ENCODE measurements at regions of chr2 and their contacts with region 1.

Region 1: GRCh38 chr2:76197842-76198448 is 487.2 kb upstream of the GCFC2 start:
- DNase-seq: peak; percentile 60 to 87
- H3K4me3 ChIP-seq: no peak overlapping the region
- H3K27ac ChIP-seq: no peak overlapping the region
- H3K4me1 ChIP-seq: peaks cover 0 to 3% (median 1%) of the 10 kb centered on the region in 4 experiments; a peak in 2 of 7 replicates
- H3K27me3 ChIP-seq: no peaks in the 10 kb centered on the region
- CTCF ChIP-seq: peak in 2 of 3 experiments; percentile 54 to 63; a peak in 3 of 4 replicates
- EP300 ChIP-seq: no peak
- POLR2A ChIP-seq: no peak
- RAD21 ChIP-seq: peak; percentile 61 to 66

Region 2: DNA sequence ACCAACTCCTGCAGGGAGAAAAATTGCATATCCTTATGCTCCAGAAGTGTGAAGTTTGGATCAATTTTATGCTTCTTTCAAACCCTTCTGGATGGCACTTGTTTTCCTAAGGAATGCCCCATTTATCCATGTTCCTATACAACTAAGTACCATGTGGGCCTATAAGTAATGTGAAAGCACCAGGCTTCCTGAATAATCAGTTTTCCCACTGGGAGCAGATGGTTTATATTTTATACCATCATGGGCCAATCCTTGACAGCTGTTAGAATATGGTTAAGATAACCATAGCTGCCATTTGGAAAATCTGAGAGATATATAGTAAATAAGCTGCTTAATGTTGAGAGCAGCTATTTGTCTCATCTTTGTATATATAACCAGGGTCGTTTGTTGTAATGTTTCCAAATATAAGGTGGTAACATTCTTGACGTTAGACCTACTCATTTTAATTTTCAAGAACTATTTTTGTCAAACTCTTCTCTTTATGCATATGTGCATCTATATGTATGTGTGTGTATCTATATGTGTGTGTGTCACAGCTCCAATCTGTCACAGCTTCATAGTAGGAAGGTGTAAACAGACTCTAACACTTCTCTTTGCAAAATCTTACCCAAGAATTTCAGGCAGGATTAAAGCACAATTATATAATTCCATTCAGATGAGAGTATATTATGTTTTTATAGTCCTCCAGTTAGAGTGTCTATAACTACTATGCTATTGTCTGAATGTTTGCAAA is 28.5 kb before region 1 on chr2:
- CTCF ChIA-PET with region 1: interaction called, 11 read pairs
- POLR2A ChIA-PET with region 1: no interaction called
- DNase-seq: no peak
- H3K4me3 ChIP-seq: no peak overlapping the region
- H3K27ac ChIP-seq: no peak overlapping the region
- H3K4me1 ChIP-seq: no peaks in the 10 kb centered on the region
- H3K27me3 ChIP-seq: no peaks in the 10 kb centered on the region
- CTCF ChIP-seq: no peak
- EP300 ChIP-seq: no peak
- POLR2A ChIP-seq: no peak
- RAD21 ChIP-seq: no peak

Region 3: DNA sequence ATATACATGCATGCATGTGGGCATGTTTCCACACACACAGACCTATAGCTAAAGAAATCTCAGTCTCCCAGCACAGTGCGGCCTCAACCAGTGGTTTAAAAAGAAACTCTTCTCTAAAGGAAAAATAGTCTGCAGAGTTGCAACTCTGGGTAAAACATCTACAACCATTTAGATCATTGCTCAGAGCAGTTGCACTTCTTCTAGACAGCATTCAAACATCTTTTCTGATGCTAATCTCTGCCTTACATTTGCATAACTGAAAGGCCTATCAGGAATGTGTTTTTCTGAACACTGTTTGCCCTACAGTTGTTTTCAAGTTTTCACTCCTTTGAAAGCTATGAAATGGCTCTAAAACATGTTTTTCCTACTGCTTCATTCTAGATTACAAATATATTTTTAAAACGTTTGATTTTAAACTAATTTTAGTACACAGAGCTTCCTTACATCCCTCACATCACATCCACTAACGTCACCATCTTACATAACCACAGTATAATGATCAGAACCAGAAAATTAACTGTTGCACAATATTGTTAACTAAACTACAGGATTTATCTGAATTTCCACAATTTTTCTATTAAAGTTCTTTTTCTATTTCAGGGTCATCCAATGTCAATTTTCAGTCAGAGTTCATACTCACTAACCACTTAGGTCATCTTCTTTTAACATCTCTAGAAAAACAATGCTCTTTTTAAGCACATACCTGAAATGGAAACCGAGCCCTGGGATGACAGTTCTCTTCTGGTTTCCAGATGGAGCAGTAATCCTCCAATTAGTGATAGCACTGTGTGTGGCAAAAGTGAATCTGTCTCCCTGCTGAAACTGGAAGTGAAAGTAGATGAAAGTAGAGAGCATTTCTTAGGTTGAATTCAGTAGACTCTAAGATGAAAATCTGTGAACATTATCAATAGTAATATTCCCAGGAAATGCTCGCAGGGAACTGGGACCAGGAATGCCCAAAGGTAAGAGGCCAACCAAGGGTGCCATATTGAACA is 14.3 kb after region 1 on chr2:
- CTCF ChIA-PET with region 1: interaction called, 30 read pairs
- POLR2A ChIA-PET with region 1: no interaction called
- DNase-seq: no peak
- H3K4me3 ChIP-seq: no peak overlapping the region
- H3K27ac ChIP-seq: no peak overlapping the region
- H3K4me1 ChIP-seq: peaks cover 0 to 7% (median 0%) of the 10 kb centered on the region in 4 experiments; a peak in 1 of 7 replicates
- H3K27me3 ChIP-seq: no peaks in the 10 kb centered on the region
- CTCF ChIP-seq: no peak
- EP300 ChIP-seq: no peak
- POLR2A ChIP-seq: no peak
- RAD21 ChIP-seq: no peak

Region 4: DNA sequence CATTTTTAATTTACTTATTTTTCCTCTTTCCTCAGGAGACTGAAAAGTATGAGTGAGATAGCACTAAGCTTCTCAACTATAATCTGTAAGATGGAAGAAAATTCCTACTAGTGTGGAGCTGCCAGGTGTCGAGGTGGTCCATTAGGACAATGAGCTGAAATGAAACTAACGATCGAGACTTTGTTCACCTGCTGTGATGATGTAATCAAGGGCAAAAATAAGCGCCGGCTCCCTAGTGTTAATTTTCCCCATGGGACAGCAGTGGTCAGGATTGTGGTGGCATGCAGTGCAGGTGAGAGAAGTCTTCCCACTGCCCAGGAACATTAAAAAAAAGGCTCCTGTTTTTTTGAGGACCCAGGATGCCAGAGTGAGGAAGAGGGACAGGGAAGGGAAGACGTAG is 371.9 kb after region 1 on chr2:
- CTCF ChIA-PET with region 1: interaction called, 10 read pairs
- POLR2A ChIA-PET with region 1: no interaction called
- DNase-seq: no peak
- H3K4me3 ChIP-seq: no peak overlapping the region
- H3K27ac ChIP-seq: no peak overlapping the region
- H3K4me1 ChIP-seq: peaks cover 0 to 16% (median 3%) of the 10 kb centered on the region in 4 experiments; a peak in 4 of 7 replicates
- H3K27me3 ChIP-seq: no peaks in the 10 kb centered on the region
- CTCF ChIP-seq: no peak
- EP300 ChIP-seq: no peak
- POLR2A ChIP-seq: no peak
- RAD21 ChIP-seq: no peak

Region 5: DNA sequence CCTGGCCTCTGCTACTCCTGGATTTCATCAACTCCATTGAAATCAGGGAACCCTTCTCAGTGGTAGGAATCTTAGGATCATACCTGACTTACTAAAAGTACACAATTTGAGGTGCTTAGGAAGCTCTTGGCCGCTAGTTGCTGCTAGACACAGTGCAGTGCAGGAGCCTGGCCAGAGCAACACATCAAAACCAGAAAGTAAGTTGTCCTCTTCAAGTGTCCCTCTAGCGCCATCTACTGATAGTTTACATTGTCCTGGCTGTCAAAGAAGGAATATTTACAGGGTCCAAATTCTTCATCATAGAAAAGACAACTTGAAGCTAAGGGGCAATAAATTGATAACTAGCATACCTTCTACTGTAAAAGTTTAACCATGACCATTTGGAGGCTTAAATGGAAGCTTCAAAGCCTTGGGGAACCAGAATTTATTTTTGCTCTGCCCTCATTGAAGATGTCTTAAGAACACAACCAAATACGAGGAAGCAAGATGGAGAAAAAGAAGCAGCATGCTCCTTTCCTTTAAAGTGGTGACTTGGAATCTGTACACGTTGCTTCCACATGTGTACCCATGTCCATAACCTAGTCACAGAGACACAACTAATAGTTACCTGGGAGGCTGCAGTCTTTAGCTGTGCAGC is 401.9 kb after region 1 on chr2:
- CTCF ChIA-PET with region 1: interaction called, 29 read pairs
- POLR2A ChIA-PET with region 1: no interaction called
- DNase-seq: peak in 1 of 2 experiments; percentile 71
- H3K4me3 ChIP-seq: no peak overlapping the region
- H3K27ac ChIP-seq: no peak overlapping the region
- H3K4me1 ChIP-seq: peaks cover 0 to 2% (median 0%) of the 10 kb centered on the region in 4 experiments; a peak in 2 of 7 replicates
- H3K27me3 ChIP-seq: no peaks in the 10 kb centered on the region
- CTCF ChIP-seq: peak; percentile 53 to 98 (median 95)
- EP300 ChIP-seq: no peak
- POLR2A ChIP-seq: no peak
- RAD21 ChIP-seq: peak; percentile 98 to 99

Measured in H1 (cell line).